PC-3 (cell line): ENCODE measurements at regions of chr21 and their contacts with region 1.

Region 1: DNA sequence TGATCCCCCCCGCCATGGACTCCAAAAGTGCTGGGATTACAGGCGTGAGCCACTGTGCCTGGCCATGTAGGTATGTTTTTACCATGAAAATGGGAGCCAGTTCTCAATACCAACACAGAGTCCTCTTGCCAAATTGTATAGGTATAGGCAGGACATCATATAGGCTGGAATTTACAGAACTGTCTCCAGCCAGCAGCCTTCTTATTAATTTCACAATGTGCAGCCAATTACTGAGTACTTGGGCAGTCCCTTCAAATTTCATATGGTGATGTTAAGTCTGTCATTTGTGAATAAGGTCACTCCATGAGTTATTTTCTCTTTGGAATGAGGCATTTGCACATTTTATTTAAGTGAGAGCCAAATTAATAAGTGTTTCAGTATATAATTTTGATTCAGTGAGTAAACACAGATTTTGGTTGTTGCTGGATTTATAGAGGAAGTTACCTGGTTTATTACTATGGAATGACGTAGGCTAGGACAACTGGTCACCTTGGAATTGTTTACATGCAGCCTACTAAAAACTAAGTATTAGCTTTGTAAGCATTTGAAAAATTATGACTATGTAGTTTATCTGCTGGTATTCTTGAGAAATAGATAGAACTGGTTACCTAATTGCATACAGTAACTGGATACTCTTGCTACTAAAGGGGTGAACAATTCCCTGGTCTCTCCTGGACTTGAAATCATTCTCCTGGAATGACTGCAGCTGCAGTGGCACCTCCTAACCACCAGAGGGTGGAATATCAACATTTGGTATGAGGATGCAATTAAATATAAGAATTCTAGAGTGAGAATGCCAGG is 3.1 kb upstream of the KRTAP27-1 start:
- DNase-seq: peak; percentile 83
- ATAC-seq: peak; percentile 82
- H3K4me3 ChIP-seq: no peak overlapping the region
- H3K27ac ChIP-seq: peak overlapping the region; percentile 78
- H3K4me1 ChIP-seq: peaks cover 19% of the 10 kb centered on the region
- H3K27me3 ChIP-seq: peaks cover 10% of the 10 kb centered on the region; the same call in 1 of the 2 replicates
- CTCF ChIP-seq: peak; percentile 96

Region 2: DNA sequence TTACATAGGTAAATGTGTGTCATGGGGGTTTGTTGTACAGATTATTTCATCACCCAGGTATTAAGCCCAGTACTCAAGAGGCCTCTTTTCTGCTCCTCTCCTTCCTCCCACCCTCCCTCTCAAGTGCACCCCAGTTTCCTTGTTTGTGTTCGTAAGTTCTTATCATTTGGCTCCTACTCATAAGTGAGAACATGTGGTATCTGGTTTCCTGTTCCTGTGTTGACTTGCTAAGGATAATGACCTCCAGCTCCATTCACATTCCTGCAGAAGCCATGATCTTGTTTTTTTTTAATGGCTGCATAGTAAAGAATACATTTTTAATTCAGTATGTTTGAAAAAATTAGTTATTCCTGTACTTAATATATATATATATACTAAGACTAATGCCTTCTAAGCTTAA is 281.7 kb before region 1 on chr21:
- CTCF ChIA-PET with region 1: interaction called, 12 read pairs
- POLR2A ChIA-PET with region 1: no interaction called
- intact Hi-C with region 1: no loop called
- DNase-seq: no peak
- ATAC-seq: no peak
- H3K4me3 ChIP-seq: no peak overlapping the region
- H3K27ac ChIP-seq: no peak overlapping the region
- H3K4me1 ChIP-seq: no peaks in the 10 kb centered on the region
- H3K27me3 ChIP-seq: peaks cover 33% of the 10 kb centered on the region
- CTCF ChIP-seq: no peak

Region 3: GRCh38 chr21:30408782-30409494 is 68.3 kb after region 1 on chr21:
- CTCF ChIA-PET with region 1: no interaction called
- POLR2A ChIA-PET with region 1: no interaction called
- intact Hi-C with region 1: loop called (anchors 1 kb)
- DNase-seq: peak; percentile 93
- ATAC-seq: peak; percentile 100
- H3K4me3 ChIP-seq: 0 out of 2 replicates have a peak overlapping the region, but pooled peaks have one; percentile 3
- H3K27ac ChIP-seq: no peak overlapping the region
- H3K4me1 ChIP-seq: no peaks in the 10 kb centered on the region
- H3K27me3 ChIP-seq: peaks cover 19% of the 10 kb centered on the region; the same call in 1 of the 2 replicates
- CTCF ChIP-seq: peak; percentile 83

Region 4: GRCh38 chr21:30478011-30478410 is 137.4 kb after region 1 on chr21:
- CTCF ChIA-PET with region 1: no interaction called
- POLR2A ChIA-PET with region 1: no interaction called
- intact Hi-C with region 1: no loop called
- DNase-seq: no peak
- ATAC-seq: no peak
- H3K4me3 ChIP-seq: no peak overlapping the region
- H3K27ac ChIP-seq: no peak overlapping the region
- H3K4me1 ChIP-seq: no peaks in the 10 kb centered on the region
- H3K27me3 ChIP-seq: peaks cover 10% of the 10 kb centered on the region; the same call in 1 of the 2 replicates
- CTCF ChIP-seq: no peak

Region 5: DNA sequence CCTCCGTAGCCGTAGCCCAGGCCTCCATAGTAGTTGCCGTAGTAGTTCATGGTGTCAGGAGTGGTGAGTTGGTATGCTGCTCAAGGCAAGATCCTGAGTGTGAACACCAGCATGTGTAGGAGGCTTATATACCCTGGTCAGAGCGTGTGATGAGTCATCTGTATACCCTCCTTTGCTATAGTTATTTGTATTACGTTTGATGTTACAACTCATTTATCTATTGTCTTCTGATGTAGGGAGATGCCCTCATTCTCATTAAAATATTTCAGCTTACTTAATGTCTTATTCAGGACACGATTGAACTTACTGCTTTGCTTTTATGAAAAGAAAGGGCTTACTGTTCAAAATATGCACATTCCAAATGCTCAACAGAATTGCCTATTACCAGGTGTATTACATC is 161.4 kb after region 1 on chr21 and contains the start of gene KRTAP19-5:
- CTCF ChIA-PET with region 1: no interaction called
- POLR2A ChIA-PET with region 1: no interaction called
- intact Hi-C with region 1: loop called (anchors 10 kb)
- DNase-seq: no peak
- ATAC-seq: no peak
- H3K4me3 ChIP-seq: no peak within 1 kb of the TSS
- H3K27ac ChIP-seq: no peak within 1 kb of the TSS
- H3K4me1 ChIP-seq: no peaks in the 10 kb centered on the region
- H3K27me3 ChIP-seq: no peaks in the 10 kb centered on the region; the same call in 1 of the 2 replicates
- CTCF ChIP-seq: no peak
- total RNA-seq, gene KRTAP19-5: not detected in 2 replicates

Region 6: DNA sequence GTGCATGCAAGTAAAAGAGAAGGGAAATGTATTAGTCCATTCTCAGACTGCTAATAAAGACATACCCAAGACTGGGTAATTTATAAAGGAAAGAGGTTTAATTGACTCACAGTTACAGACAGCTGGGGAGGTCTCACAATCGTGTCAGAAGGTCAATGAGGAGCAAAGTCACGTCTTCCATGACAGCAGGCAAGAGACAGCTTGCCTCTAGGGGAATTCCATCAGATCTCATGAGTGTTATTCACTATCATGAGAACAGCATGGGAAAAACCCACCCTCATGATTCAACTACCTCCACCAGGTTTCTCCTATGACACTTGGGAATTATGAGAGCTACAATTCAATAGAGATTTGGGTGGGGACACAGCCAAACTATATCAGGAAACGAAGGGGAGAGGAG is 369.9 kb after region 1 on chr21:
- CTCF ChIA-PET with region 1: no interaction called
- POLR2A ChIA-PET with region 1: no interaction called
- intact Hi-C with region 1: loop called (anchors 5 kb)
- DNase-seq: no peak
- ATAC-seq: no peak
- H3K4me3 ChIP-seq: no peak overlapping the region
- H3K27ac ChIP-seq: no peak overlapping the region
- H3K4me1 ChIP-seq: peaks cover 15% of the 10 kb centered on the region
- H3K27me3 ChIP-seq: no peaks in the 10 kb centered on the region
- CTCF ChIP-seq: no peak